AG04450 (cell line): ENCODE measurements at regions of chr11 and their contacts with region 1.

Region 1: DNA sequence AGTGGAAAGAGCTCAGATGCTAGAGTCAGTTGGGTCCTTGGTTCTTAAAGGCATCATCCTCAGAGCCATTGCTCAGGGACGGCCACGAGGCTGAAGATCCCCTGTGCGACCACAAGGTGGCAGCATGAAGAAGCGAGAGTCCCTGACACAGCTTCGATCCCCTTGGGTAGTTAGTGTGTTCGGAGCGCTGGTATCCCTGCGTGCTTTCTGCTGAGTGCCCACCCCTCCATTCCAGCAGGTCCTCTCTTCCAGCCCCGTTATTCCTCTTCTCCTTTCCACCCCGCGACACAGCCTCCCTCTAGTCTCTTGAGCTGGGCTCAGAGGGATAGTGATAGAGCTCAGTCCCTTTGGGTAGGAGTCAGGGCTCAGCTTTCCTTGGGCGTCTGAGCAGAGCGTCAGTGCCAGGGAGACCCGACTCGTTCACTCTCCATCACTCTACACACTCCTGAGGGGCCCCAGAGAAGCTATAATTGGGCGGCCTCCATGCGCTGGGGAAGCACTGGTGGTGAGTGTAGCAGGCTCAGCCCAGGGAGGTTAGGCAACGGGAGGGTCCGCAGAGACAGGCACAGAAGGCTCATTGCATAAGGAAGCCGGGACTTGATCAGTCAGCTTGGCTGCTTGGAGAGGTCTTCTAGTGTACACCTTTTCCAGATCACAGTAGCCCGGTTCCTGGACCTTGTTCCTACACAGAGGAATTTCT is at the start of gene OR51D1:
- DNase-seq: peak; percentile 47
- H3K4me3 ChIP-seq: peak within 1 kb of the TSS; percentile 54
- H3K27ac ChIP-seq: no peak within 1 kb of the TSS
- H3K27me3 ChIP-seq: no peaks in the 10 kb centered on the region
- CTCF ChIP-seq: peak; percentile 95
- polyA plus RNA-seq, gene OR51D1: not detected in 2 replicates

Region 2: GRCh38 chr11:4647766-4648165 is 10.7 kb after region 1 on chr11:
- CTCF ChIA-PET with region 1: interaction called, 46 read pairs
- POLR2A ChIA-PET with region 1: no interaction called
- DNase-seq: no peak
- H3K4me3 ChIP-seq: no peak overlapping the region
- H3K27ac ChIP-seq: no peak overlapping the region
- H3K27me3 ChIP-seq: no peaks in the 10 kb centered on the region
- CTCF ChIP-seq: no peak

Region 3: DNA sequence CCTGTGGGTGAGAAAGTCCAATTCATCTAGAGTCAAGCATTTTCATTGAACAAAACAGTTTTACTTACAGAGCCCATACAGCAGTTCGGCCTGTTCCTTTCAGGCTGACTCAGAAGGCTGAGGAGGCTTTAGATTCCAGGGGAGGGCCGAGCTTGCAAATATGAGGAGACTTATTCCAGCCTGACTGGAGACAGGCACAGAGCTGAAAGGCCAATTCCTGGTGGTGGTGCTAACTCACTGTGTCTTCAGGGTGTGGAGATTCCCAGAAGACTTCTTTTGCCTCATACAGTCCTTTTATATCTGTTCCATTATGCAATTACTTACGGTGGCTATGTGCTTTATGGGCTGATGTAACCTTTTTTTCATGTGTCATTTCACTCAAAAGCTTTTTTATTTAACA is 60.5 kb after region 1 on chr11 and contains the start of gene OR51E2:
- CTCF ChIA-PET with region 1: interaction called, 32 read pairs
- POLR2A ChIA-PET with region 1: no interaction called
- DNase-seq: peak; percentile 26
- H3K4me3 ChIP-seq: no peak within 1 kb of the TSS
- H3K27ac ChIP-seq: no peak within 1 kb of the TSS
- H3K27me3 ChIP-seq: no peaks in the 10 kb centered on the region
- CTCF ChIP-seq: no peak
- polyA plus RNA-seq, gene OR51E2: 0.77 and 0.79 TPM in 2 replicates

Region 4: DNA sequence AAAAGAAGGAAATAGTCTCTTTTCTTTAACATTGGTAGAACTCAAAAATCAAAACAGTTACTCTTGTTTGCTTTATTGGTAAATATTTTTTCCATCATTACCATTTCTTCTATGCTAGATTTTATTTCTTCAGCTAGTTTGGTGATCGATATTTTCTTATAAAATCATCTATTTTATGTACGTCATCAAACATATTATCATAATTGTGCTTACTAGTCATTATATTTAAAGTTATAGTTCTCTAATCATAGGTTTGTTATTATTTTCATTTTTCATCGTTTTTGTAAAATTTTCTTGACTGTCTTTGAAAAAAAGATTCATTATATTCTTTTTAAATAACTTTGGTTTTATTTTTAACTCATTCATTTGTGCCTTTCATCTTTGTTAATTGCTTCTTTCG is 181.1 kb after region 1 on chr11:
- CTCF ChIA-PET with region 1: interaction called, 14 read pairs
- POLR2A ChIA-PET with region 1: no interaction called
- DNase-seq: no peak
- H3K4me3 ChIP-seq: no peak overlapping the region
- H3K27ac ChIP-seq: no peak overlapping the region
- H3K27me3 ChIP-seq: no peaks in the 10 kb centered on the region
- CTCF ChIP-seq: no peak

Region 5: DNA sequence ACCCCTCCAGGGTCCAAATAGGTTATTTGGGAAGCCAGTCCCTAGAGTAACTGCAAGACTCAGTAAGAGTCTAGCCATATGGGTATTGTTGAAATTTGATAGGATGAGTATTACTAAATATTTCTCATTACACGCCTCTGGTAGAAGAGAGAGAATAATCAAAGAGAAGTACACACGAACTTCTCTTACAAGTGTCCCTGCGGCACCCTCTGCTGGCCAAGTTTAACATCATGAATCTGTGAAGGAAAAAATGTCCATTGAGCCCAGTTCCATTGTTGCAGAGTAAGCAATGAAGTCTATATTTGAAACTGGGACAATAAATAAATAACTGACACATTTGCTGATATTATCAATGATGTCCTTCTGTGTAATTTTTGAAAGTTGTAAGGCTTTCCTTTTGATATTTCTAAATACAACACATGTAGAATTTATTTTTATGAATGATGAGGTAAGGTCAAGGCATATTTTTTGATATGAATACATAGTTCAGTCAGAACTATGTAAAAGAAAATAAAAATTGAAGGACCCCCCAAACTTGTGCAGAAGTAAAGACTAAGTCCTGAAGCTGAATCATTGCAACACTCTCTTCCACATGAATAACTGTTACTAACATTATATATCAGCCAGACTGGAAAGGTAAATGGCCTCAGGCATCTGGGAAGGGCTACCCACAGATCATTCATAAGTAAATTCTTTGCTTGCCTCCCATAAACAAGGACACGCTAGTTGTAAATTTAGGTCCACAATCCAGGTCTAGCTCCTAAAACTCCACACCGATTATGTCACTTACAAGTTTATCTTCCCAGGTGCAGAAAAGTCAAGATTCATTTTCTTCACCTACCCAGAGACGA is 367.5 kb after region 1 on chr11:
- CTCF ChIA-PET with region 1: interaction called, 39 read pairs
- POLR2A ChIA-PET with region 1: no interaction called
- DNase-seq: peak; percentile 27
- H3K4me3 ChIP-seq: no peak overlapping the region
- H3K27ac ChIP-seq: no peak overlapping the region
- H3K27me3 ChIP-seq: no peaks in the 10 kb centered on the region
- CTCF ChIP-seq: peak; percentile 77